CD14-positive monocyte (primary cell): ENCODE measurements at regions of chr18 and their contacts with region 1.

Region 1: DNA sequence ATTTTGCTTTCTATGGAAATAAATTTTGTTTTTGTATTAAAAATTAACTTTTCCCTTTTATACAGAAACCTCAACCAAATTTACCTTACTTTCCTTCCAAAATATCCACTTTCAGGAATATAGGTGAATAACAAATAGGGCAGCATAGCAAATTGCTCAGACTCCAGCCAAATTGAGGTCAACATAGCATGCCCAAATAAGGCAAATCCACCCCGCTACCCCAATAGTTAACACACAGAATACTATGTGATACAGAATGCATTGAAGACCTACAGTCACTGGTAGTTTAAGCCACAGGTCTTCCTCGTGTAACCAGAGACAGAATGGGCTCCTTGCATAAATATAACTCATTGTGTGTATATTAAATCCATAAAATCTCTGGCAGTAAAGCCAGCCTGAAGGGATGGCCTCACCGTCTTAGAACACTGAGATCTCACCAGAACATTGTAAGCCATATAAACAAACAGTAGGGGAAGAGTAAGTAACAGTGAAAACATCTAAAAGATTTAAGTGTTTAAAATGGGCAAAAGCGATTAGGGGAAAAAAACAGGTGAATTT is 72.2 kb downstream of the PMAIP1 start:
- DNase-seq: no peak
- H3K4me3 ChIP-seq: no peak overlapping the region
- H3K4me3 Mint-ChIP-seq: no peak overlapping the region
- H3K27ac ChIP-seq: no peak overlapping the region
- H3K27ac Mint-ChIP-seq: no peak overlapping the region
- H3K4me1 ChIP-seq: peaks cover 0 to 5% of the 10 kb centered on the region in 2 donors
- H3K4me1 Mint-ChIP-seq: peaks cover 13% of the 10 kb centered on the region
- H3K27me3 ChIP-seq: peaks cover 16% of the 10 kb centered on the region in 2 donors
- H3K27me3 Mint-ChIP-seq: peaks cover 10 to 41% (median 28%) of the 10 kb centered on the region in 3 donors
- CTCF ChIP-seq: no peak

Region 2: GRCh38 chr18:59837586-59837985 is 134.4 kb before region 1 on chr18:
- intact Hi-C with region 1: loop called in 1 of 2 experiments (anchors 10 kb)
- DNase-seq: peak; percentile 61 to 75 (median 74)
- H3K4me3 ChIP-seq: no peak overlapping the region
- H3K4me3 Mint-ChIP-seq: no peak overlapping the region
- H3K27ac ChIP-seq: no peak overlapping the region
- H3K27ac Mint-ChIP-seq: peak overlapping the region in 1 of 7 donors; percentile 30
- H3K4me1 ChIP-seq: peaks cover 0 to 2% of the 10 kb centered on the region in 2 donors
- H3K4me1 Mint-ChIP-seq: peaks cover 3% of the 10 kb centered on the region
- H3K27me3 ChIP-seq: no peaks in the 10 kb centered on the region
- H3K27me3 Mint-ChIP-seq: peaks cover 0 to 1% (median 1%) of the 10 kb centered on the region in 3 donors
- CTCF ChIP-seq: peak; percentile 81